ENCODE measurements at regions of chr10 and their contacts with region 1.

Region 1: GRCh38 chr10:4892681-4893080 is 66.7 kb downstream of the AKR1E2 start:
- DNase-seq: no peak
- H3K4me3 Mint-ChIP-seq: no peak overlapping the region
- H3K27ac Mint-ChIP-seq: no peak overlapping the region
- H3K4me1 Mint-ChIP-seq: no peaks in the 10 kb centered on the region
- H3K27me3 Mint-ChIP-seq: no peaks in the 10 kb centered on the region

Region 2: GRCh38 chr10:5002013-5002727 is 109.5 kb after region 1 on chr10:
- CTCF ChIA-PET with region 1: no interaction called
- intact Hi-C with region 1: no loop called
- DNase-seq: no peak
- H3K4me3 Mint-ChIP-seq: no peak overlapping the region
- H3K27ac Mint-ChIP-seq: no peak overlapping the region
- H3K4me1 Mint-ChIP-seq: no peaks in the 10 kb centered on the region
- H3K27me3 Mint-ChIP-seq: peaks cover 4% of the 10 kb centered on the region

Region 3: DNA sequence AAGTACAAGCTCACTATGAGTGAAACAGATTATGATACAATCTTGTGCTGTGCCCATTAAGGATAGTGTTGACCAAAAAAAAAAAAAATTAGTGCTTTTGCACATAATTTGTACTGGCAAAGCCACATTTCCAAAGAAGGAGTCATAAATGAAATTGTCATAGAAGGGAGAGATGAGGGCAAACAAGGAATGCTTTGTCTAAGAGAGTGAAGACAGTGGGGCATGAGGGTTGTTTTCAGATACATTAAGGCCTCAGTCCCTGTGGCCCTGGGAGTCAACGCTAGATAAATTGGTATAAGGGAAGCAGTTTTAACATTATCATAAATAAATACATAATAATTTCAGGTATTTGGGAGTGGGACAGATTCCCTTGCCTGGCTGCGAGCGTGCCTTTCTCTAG is 1954.9 kb after region 1 on chr10:
- CTCF ChIA-PET with region 1: interaction called, 10 read pairs
- intact Hi-C with region 1: no loop called
- DNase-seq: no peak
- H3K4me3 Mint-ChIP-seq: no peak overlapping the region
- H3K27ac Mint-ChIP-seq: no peak overlapping the region
- H3K4me1 Mint-ChIP-seq: no peaks in the 10 kb centered on the region
- H3K27me3 Mint-ChIP-seq: peaks cover 7% of the 10 kb centered on the region